Cardiac septum (tissue), 1 donor: ENCODE measurements at regions of chr12 and their contacts with region 1.

Region 1: DNA sequence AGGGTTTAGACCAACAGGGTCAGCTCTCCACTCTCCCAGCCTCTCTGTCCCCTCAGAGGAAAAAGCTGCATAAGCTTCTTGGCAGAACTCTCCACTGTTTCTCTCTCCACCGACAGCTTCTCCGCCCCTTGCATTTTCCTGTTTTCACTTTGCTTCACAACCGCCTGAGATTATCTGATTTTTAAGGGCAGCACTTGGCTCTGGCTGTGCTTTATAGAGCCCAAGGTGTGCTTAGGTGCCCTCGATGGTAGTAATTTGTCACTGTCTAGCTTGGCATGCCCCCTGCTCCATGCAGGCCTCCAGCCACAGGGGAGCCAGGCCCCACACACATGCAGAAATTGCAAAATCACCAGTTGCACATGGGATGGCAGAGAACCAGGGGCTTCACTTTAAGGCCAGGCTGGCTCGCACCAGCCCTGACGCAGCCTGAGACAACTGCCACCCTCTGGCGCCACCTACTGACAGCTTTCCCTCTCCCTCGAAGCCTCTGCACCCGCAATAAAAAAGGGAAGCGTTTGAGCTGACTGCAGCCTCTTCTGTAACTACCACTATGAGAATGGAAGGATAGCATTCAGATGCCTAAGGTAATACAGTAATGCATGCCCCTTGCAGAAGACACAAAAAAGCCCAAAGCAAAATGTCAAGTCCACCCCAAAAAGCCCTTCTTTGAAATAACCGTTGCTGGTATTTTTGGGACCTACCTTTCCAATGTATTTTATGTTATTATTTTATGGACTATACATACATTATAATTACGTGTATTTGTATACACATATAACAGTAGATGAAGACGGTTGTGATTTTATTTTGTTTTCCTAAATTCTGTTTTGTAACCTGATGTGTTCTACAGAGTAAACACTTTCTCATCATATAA is 32.0 kb upstream of the RIMBP2 start:
- DNase-seq: peak; percentile 81

Region 2: DNA sequence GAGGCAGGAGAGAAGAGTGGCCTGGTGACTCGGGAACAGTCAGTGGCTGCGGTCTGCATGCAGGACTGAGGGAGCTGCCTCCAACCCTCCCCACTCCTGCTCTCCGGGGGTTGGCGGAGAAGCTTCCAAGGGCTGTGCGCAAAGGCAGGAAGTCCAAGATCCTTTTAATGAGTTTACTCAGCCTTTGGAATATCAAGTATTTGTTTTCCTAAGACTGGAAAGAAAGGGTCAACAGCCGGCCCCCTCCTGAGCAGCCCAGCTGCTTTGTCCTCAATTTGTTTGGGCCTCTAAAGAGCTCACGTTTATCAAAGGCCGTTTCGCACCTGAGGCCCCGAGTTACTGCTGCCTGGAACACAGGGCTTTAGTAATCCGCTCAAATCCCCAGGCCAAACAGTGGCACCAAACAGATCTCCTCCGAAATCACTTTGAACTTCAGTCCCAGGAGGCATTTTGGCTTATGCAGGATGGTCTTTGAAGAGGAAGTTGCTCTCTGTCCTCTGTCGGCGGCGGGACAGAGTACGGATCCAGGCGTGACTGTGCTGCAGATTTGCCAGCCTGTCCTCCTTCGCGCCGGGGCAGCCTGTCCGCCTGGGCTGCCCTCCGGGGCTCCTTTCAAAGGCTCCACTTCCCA is 703.0 kb before region 1 on chr12:
- intact Hi-C with region 1: loop called (anchors 5 kb)
- DNase-seq: peak; percentile 54

Region 3: GRCh38 chr12:130401703-130402102 is 346.4 kb before region 1 on chr12:
- intact Hi-C with region 1: loop called (anchors 1 kb)
- DNase-seq: no peak

Region 4: DNA sequence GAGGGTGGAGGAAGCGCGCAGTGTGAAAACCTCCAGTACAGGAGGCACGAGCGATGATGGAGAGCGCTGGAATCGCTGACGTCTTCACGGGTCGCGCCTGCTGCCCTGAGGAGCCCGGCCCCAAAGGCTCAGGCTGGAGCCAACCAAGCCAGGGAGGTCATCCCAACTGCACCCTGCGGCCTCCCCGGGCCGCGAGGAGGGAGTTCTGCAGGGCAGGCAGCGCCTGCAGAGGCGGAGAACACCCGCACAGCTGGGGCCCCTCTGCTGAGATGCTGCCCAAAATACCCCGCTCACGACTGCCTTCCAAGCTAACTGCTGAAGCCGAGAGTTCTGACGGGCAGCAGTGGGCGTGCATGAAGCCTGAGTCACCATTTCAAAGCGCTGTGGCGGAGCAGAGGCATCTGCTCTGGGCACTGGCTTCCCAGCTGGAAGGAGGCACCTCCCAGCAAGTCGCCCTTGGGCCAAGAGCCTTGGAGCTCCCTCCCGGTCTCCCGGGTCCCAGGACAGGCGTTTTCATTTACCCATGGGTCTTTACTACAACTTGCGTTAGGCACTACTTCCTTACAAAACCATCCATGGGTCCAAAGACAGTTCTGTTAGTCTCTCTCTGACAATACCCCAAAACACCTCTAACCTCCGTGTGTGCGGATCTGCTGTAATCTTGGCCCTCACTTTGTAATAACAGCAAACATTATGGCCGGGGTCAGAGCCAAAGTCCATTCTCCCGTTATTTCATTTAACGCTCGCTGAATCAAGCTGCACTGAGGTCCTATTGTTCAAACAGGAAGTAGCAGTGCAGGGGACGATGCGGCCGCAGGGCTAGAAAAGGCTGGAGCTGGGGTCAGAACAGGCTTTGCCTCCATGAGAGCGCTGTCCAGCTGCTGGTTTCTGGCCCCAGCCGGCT is 28.1 kb after region 1 on chr12:
- intact Hi-C with region 1: no loop called
- DNase-seq: no peak

Region 5: DNA sequence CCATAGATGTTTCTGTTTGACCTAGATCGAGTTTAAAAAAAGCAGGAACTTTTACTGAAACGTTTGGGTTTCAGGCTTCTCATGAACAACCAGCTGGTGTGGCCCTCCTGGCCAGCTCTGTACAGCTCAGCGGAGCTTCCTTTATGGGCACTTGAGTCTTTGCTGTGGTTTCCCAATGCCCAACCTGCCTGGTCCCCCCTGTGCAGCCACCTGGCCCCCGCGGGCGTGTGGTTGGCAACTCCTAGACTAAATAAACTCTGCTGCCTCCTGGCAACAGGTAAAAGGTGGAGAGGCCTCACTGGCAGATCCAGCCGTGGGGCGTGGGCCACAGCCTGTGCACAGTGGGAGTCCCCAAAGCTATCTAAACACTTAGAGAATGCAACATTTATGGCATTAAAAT is 244.3 kb after region 1 on chr12:
- intact Hi-C with region 1: no loop called
- DNase-seq: no peak